ENCODE measurements at regions of chr10 and their contacts with region 1.

Region 1: DNA sequence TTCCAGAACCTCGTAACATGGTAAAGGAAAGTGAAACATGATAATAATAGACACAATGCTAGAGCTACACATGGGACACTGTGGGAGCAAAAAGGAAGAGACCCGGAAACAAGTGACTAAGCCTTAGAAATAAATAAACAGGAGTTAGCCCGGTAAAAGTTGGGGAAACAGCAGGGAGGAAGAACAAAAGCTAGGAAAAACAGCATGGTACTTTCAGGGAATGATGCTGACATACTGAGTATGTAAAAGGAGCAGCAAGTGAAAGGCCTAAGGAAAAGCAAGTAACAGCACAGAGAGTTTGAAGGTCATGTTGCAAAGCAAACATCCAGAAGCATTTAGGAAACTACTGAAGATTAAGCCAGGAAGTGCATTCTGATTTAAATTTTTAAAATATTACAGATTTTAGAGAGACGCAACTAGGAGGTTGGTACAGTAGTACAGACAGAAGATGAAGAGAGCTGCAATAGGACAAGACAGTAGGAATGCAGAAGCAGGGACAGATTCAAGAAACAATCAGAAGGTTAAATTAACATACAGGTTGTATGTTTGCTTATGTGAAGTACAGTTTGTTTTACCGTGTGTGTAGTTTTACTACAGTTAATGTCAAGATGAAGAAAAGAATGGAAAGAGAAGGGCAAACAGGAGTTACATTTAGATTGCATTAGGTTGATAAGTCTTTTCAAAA is 63.7 kb downstream of the ARHGAP12 start:
- DNase-seq: peak; percentile 54
- ATAC-seq: peak; percentile 69
- H3K4me3 ChIP-seq: peak overlapping the region; percentile 22; the same call in 1 of the 2 replicates
- H3K27ac ChIP-seq: no peak overlapping the region
- H3K4me1 ChIP-seq: peaks cover 6% of the 10 kb centered on the region
- H3K27me3 ChIP-seq: no peaks in the 10 kb centered on the region
- CTCF ChIP-seq: no peak
- POLR2A ChIP-seq: no peak
- RAD21 ChIP-seq: no peak

Region 2: DNA sequence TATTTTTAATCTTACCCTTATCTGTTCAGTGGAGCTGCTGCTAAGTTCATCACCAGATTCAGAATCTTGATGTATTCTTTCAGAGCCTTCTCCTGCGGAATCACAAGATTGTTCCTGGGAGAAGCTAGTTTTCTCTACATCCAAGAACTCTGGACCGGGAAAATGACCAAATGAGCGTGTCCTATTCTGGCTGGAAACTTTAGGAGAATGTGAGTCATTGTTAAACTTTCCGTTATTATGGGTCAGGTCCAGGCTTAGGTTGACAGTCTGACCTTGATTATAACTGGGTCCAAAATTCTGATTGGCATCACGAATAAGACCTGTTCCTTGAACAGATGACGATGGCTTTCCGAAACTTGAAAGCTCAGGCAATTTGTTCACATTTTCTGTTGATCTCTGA is 43.2 kb after region 1 on chr10:
- CTCF ChIA-PET with region 1: no interaction called
- POLR2A ChIA-PET with region 1: no interaction called
- dilution Hi-C with region 1: no loop called
- in situ Hi-C with region 1: no loop called
- intact Hi-C with region 1: loop called (anchors 5 kb)
- DNase-seq: no peak
- ATAC-seq: no peak
- H3K4me3 ChIP-seq: no peak overlapping the region
- H3K27ac ChIP-seq: no peak overlapping the region
- H3K4me1 ChIP-seq: peaks cover 11% of the 10 kb centered on the region
- H3K27me3 ChIP-seq: no peaks in the 10 kb centered on the region
- CTCF ChIP-seq: no peak
- POLR2A ChIP-seq: no peak
- RAD21 ChIP-seq: no peak

Region 3: DNA sequence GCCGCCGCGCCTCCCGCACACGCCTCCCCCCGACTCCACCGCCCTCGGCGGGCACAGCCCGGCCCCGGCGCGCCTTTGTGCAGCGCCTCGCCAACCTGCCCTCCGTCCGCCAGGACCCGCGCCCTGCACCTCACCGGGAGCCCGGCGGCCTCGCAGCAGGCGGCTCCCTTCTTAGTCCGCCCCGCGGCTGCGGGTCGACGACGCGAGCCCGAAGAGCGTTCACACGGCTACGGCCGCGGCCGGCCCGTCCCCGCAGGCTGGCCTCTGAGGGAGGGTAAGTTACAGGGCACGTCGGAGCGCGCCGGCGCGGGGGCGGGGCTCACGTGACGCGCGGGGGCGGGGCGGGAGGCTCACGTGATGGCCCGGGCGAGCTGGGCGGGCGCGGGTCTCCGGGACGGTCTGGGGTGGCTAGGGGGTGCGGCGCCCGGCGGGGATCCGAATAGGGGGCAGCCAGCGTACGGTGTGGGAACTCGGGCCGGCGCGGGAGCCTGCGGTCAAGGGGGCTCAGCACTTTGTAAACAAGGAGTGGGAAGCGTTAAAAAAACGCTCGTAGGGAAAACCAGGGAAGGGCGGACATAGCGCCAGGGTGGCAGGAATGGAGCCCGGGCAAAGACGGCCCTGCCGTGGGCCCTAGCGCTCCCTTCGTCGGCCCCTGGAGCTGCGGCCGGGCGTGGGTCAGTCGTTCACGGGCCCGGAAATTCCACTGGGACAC is 63.7 kb after region 1 on chr10 and contains the start of gene ARHGAP12:
- CTCF ChIA-PET with region 1: interaction called, 10 read pairs
- POLR2A ChIA-PET with region 1: interaction called, 3 read pairs
- dilution Hi-C with region 1: no loop called
- in situ Hi-C with region 1: no loop called
- intact Hi-C with region 1: loop called (anchors 5 kb)
- DNase-seq: peak; percentile 77
- ATAC-seq: peak; percentile 85
- H3K4me3 ChIP-seq: peak within 1 kb of the TSS; percentile 71
- H3K27ac ChIP-seq: peak within 1 kb of the TSS; percentile 91
- H3K4me1 ChIP-seq: peaks cover 4% of the 10 kb centered on the region
- H3K27me3 ChIP-seq: no peaks in the 10 kb centered on the region
- CTCF ChIP-seq: no peak
- POLR2A ChIP-seq: peak; percentile 85
- RAD21 ChIP-seq: no peak
- total RNA-seq, gene ARHGAP12: 28.5 and 42.2 TPM in 2 replicates

Region 4: GRCh38 chr10:32207544-32207943 is 342.6 kb after region 1 on chr10:
- CTCF ChIA-PET with region 1: no interaction called
- POLR2A ChIA-PET with region 1: no interaction called
- dilution Hi-C with region 1: no loop called
- in situ Hi-C with region 1: loop called (anchors 25 kb)
- intact Hi-C with region 1: no loop called
- DNase-seq: peak; percentile 28
- ATAC-seq: 0 out of 2 replicates have a peak, but pooled peaks have one; percentile 30
- H3K4me3 ChIP-seq: no peak overlapping the region
- H3K27ac ChIP-seq: no peak overlapping the region
- H3K4me1 ChIP-seq: peaks cover 1% of the 10 kb centered on the region; the same call in 1 of the 2 replicates
- H3K27me3 ChIP-seq: no peaks in the 10 kb centered on the region; the same call in 1 of the 2 replicates
- CTCF ChIP-seq: peak; percentile 63
- POLR2A ChIP-seq: no peak
- RAD21 ChIP-seq: peak; percentile 76